ENCODE measurements at regions of chr11 and their contacts with region 1.

Region 1: DNA sequence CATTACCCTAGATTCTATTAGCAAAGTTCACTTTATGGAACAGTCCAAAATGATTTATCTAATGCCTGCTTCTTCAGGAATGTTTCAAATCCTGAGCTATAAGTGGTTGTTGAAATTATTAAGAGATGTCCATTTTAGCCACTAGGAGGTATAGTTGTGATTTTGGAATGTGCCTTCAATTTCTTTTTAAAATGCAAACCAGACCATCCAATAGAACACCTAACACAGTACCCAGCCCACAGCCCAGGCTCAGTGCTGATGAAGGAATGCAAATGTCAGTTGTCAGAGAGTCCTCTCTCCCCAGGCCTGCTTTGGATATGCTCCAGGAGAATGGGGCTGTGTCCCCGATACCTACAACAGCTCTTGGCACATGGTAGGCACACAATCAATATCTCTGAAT is 85.8 kb upstream of the E2F8 start:
- DNase-seq: peak; percentile 47
- H3K4me3 ChIP-seq: no peak overlapping the region
- H3K27ac ChIP-seq: no peak overlapping the region
- H3K4me1 ChIP-seq: no peaks in the 10 kb centered on the region
- H3K27me3 ChIP-seq: peaks cover 0 to 5% of the 10 kb centered on the region in 2 experiments
- CTCF ChIP-seq: peak; percentile 17
- POLR2A ChIP-seq: no peak

Region 2: GRCh38 chr11:19311308-19312030 is 15.0 kb before region 1 on chr11:
- CTCF ChIA-PET with region 1: interaction called, 15 read pairs
- POLR2A ChIA-PET with region 1: no interaction called
- dilution Hi-C with region 1: no loop called
- intact Hi-C with region 1: no loop called
- DNase-seq: peak; percentile 62
- H3K4me3 ChIP-seq: no peak overlapping the region
- H3K27ac ChIP-seq: no peak overlapping the region
- H3K4me1 ChIP-seq: no peaks in the 10 kb centered on the region
- H3K27me3 ChIP-seq: peaks cover 8 to 14% of the 10 kb centered on the region in 2 experiments
- CTCF ChIP-seq: peak; percentile 90 to 97
- POLR2A ChIP-seq: no peak

Region 3: DNA sequence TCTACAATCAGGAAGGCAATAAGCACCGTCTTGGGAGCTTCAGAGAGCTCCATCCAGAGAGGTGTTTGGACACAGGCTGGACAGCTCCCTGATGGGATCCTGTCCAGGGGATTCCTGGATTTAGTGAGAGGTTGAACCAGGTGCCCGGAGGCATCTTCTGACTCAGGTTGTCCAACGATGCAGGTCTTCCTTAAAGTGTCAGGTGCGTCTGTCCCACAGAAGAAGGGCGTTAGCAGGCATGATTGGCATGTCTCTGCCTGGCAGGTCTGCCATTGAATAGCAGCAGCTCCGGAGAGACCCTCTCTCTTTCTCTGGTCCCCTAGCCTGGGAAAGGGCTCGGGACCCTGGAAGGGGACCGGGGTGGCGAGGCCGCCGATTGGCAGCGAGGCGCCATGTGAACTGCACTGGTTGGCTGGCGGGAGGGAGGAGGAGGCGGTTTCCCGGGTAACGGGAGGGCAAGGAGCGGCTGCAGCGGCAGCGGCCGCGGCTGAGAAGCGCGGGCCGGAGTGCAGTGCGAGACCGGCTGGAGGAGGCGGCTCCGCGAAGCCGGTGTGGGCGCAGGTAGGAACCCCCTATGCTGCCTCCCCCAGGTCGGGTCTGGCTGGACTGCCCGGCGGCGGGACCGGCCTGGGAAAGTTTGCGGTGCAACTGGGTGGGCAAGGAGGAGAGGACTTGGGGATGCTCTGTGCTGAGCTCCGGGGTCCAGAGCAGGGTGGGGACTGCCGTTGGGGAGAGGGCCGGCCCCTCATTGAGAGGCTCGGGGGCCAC is 18.4 kb after region 1 on chr11:
- CTCF ChIA-PET with region 1: interaction called, 14 read pairs
- POLR2A ChIA-PET with region 1: no interaction called
- dilution Hi-C with region 1: no loop called
- intact Hi-C with region 1: no loop called
- DNase-seq: peak; percentile 43
- H3K4me3 ChIP-seq: peak overlapping the region in 2 of 3 experiments; percentile 32 to 58
- H3K27ac ChIP-seq: no peak overlapping the region
- H3K4me1 ChIP-seq: peaks cover 12% of the 10 kb centered on the region
- H3K27me3 ChIP-seq: peaks cover 23 to 36% of the 10 kb centered on the region in 2 experiments
- CTCF ChIP-seq: no peak
- POLR2A ChIP-seq: no peak

Region 4: DNA sequence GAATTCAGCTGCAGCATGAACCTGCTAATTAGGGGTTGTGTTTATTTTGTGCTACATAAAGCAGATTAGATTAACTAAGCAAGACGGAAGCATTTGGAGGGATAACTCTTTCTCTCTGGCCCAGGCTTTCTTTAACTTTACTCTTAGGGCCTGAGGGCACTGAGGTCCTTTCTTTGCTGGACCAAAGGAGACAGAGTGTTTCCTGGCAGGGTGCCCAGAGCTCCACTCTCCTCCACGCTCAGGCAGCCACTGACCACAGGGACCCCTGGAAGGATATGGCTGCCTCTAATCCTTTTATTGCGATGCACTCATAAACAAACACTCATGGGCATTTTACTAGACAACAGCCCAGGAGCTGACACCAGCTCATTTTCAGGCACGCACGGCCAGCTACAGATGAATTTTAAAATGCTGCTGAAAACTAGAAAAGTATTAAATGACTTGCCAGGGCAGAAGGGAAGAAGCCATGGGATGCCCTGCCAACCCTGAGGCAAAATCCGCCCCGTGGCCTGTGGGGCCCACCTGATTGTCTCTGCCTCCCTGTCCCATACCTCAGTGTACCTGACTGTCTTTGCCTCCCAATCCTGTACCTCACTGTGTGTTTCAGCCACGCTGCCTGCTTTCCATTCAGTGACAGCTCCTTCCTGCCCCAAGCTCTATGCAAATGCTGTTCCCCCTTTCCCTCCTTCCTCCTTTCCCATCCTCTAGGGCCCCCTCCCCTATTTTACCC is 193.6 kb after region 1 on chr11:
- CTCF ChIA-PET with region 1: interaction called, 17 read pairs
- POLR2A ChIA-PET with region 1: no interaction called
- dilution Hi-C with region 1: no loop called
- intact Hi-C with region 1: no loop called
- DNase-seq: no peak
- H3K4me3 ChIP-seq: no peak overlapping the region
- H3K27ac ChIP-seq: no peak overlapping the region
- H3K4me1 ChIP-seq: no peaks in the 10 kb centered on the region
- H3K27me3 ChIP-seq: peaks cover 0 to 2% of the 10 kb centered on the region in 2 experiments
- CTCF ChIP-seq: no peak
- POLR2A ChIP-seq: no peak

Region 5: GRCh38 chr11:19546325-19546724 is 219.8 kb after region 1 on chr11:
- CTCF ChIA-PET with region 1: interaction called, 102 read pairs
- POLR2A ChIA-PET with region 1: interaction called, 3 read pairs
- dilution Hi-C with region 1: no loop called
- intact Hi-C with region 1: no loop called
- DNase-seq: no peak
- H3K4me3 ChIP-seq: no peak overlapping the region
- H3K27ac ChIP-seq: no peak overlapping the region
- H3K4me1 ChIP-seq: no peaks in the 10 kb centered on the region
- H3K27me3 ChIP-seq: no peaks in the 10 kb centered on the region
- CTCF ChIP-seq: no peak
- POLR2A ChIP-seq: no peak

Measured in endothelial cell of umbilical vein (primary cell).